ENCODE measurements at regions of chr7 and their contacts with region 1.

Region 1: DNA sequence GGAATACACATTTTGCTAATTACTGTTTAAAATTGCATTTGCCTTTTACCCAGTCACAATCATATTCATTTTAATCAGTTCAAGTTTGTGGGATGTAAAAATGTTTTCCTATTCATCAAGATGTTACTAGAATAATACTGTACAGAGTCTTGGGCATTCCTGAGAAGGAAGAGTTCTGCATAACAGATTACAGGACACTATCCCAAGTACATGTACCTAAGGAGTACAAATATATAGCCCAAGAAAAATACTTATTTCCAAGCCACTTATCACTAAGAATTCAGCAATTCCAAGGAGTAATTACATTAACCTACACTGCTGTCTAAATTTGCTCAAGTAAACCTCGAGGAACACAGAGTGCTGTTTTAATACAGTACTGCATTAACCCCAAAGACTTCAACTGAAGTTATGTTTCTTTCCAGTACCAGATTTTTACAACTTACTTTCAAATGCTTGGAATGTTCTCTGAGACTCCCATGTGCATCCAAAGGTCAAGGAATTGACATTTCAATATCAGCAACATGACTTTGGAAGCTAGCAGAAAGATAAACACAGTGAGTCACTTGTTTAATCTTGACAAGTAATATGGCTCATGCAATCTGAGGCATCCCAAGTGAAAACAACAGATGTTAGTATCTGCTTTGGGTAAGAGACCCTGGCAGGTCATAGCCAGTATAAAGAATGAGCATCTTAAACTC is 125.4 kb upstream of the BET1 start:
- DNase-seq: no peak
- ATAC-seq: peak in 2 of 8 donors; percentile 4 to 80
- H3K4me3 ChIP-seq: no peak overlapping the region
- H3K27ac ChIP-seq: no peak overlapping the region
- H3K4me1 ChIP-seq: peaks cover 0 to 11% (median 0%) of the 10 kb centered on the region in 9 donors
- H3K27me3 ChIP-seq: no peaks in the 10 kb centered on the region
- CTCF ChIP-seq: no peak

Region 2: GRCh38 chr7:92809397-92810241 is 1320.0 kb before region 1 on chr7:
- intact Hi-C with region 1: loop called in 1 of 10 experiments (anchors 5 kb)
- DNase-seq: peak in 1 of 2 donors; percentile 77
- ATAC-seq: peak; percentile 88 to 97 (median 93)
- H3K4me3 ChIP-seq: peak overlapping the region in 3 of 10 donors; percentile 0 to 8 (median 4)
- H3K27ac ChIP-seq: peak overlapping the region in 9 of 10 donors; percentile 41 to 84 (median 61)
- H3K4me1 ChIP-seq: peaks cover 5 to 48% (median 34%) of the 10 kb centered on the region in 9 donors
- H3K27me3 ChIP-seq: no peaks in the 10 kb centered on the region
- CTCF ChIP-seq: no peak

Region 3: DNA sequence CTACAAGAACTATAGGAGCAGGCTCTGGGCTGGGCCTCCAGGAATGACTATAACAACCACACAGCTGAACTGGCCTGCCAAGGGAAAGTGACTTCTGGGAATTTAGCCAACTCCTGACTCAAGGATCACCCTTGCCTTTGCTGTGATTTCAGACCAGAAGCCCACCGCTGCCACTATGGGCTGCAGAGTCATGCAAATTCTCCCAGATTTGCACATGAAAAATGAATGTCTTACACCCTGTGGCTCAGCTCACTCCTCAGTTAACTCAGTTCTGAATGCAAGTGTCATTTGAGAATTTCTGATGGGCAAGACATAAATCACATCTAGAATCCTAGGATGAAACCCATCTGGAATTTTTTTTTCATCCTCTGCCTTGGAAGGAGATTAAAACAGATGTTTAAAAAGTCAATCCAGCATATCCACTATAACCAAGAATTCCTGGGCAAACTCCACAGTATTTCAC is 61.0 kb after region 1 on chr7:
- intact Hi-C with region 1: no loop called
- DNase-seq: peak in 1 of 2 donors; percentile 9
- ATAC-seq: peak in 3 of 8 donors; percentile 41 to 66 (median 60)
- H3K4me3 ChIP-seq: no peak overlapping the region
- H3K27ac ChIP-seq: peak overlapping the region in 1 of 10 donors; percentile 2
- H3K4me1 ChIP-seq: peaks cover 0 to 10% (median 0%) of the 10 kb centered on the region in 9 donors
- H3K27me3 ChIP-seq: no peaks in the 10 kb centered on the region
- CTCF ChIP-seq: no peak

Measured in heart right ventricle (tissue), 16 donors.